MCF 10A (cell line): ENCODE measurements at regions of chr19 and their contacts with region 1.

Region 1: DNA sequence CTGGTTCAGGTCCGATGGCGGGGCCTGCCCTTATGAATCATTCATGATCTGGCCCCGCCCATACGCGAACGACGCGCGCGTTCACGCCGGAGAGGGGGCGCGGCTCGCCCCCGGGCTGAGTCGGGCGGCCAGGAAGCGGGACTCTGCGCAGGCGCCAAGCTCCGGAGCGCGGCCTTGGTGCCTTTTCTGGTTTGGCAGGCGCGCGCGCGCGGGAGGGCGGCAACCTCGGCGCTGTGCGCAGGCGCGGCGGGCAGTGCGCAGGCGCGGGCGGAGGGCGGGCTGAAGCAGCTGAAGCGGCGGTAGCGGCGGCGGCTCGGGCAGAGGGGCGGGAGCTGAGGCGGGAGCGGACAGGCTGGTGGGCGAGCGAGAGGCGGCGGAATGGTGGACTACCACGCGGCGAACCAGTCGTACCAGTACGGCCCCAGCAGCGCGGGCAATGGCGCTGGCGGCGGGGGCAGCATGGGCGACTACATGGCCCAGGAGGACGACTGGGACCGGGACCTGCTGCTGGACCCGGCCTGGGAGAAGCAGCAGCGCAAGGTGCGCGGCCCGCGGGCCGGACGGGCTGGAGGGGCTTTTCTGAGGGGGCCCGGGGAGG is at the start of gene ACTN4:
- DNase-seq: peak; percentile 97
- H3K4me3 Mint-ChIP-seq: peak within 1 kb of the TSS; percentile 84
- H3K27ac Mint-ChIP-seq: peak within 1 kb of the TSS; percentile 86
- H3K4me1 Mint-ChIP-seq: peaks cover 14% of the 10 kb centered on the region
- H3K27me3 Mint-ChIP-seq: no peaks in the 10 kb centered on the region
- CTCF ChIP-seq: no peak
- total RNA-seq, gene ACTN4: 300 and 320 TPM in 2 replicates

Region 2: GRCh38 chr19:38483016-38483630 is 164.3 kb before region 1 on chr19:
- CTCF ChIA-PET with region 1: no interaction called
- POLR2A ChIA-PET with region 1: no interaction called
- intact Hi-C with region 1: no loop called
- DNase-seq: no peak
- H3K4me3 Mint-ChIP-seq: no peak overlapping the region
- H3K27ac Mint-ChIP-seq: no peak overlapping the region
- H3K4me1 Mint-ChIP-seq: no peaks in the 10 kb centered on the region
- H3K27me3 Mint-ChIP-seq: peaks cover 27% of the 10 kb centered on the region
- CTCF ChIP-seq: no peak

Region 3: DNA sequence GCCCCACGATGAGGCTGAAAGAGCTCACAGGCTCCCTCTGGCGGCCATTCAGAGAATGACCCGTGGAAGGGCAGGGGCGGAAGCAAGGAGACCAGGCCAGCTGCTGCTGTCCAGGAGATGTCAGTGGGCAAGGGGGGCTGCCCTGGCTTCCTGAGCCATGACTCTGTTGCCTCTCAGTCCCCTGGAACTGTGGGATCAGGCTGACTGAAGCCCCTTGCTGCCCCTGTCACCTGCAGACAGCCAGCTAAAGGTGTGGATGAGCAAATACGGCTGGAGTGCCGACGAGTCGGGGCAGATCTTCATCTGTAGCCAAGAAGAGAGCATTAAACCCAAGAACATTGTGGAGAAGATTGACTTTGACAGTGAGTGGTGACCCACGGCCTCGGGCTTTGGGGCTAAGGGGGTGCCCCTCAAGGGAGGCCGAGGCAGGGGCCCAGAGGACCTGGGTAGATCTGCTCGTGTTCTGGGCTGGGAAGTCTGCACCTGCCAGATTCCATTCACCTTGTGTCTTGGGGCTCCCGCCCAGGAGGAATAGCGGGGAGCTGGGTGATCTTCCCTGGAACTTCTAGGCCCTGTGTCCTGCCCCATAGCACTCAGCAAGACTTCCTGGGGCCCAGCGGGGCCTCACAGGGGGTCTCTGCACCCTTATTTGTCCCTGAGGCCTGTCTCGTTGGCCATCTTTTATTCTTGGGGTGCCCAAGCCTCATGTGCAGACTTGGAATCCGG is 12.5 kb before region 1 on chr19:
- CTCF ChIA-PET with region 1: interaction called, 10 read pairs
- POLR2A ChIA-PET with region 1: interaction called, 81 read pairs
- intact Hi-C with region 1: no loop called
- DNase-seq: peak; percentile 80
- H3K4me3 Mint-ChIP-seq: no peak overlapping the region
- H3K27ac Mint-ChIP-seq: peak overlapping the region; percentile 24
- H3K4me1 Mint-ChIP-seq: peaks cover 17% of the 10 kb centered on the region
- H3K27me3 Mint-ChIP-seq: no peaks in the 10 kb centered on the region
- CTCF ChIP-seq: peak; percentile 91

Region 4: DNA sequence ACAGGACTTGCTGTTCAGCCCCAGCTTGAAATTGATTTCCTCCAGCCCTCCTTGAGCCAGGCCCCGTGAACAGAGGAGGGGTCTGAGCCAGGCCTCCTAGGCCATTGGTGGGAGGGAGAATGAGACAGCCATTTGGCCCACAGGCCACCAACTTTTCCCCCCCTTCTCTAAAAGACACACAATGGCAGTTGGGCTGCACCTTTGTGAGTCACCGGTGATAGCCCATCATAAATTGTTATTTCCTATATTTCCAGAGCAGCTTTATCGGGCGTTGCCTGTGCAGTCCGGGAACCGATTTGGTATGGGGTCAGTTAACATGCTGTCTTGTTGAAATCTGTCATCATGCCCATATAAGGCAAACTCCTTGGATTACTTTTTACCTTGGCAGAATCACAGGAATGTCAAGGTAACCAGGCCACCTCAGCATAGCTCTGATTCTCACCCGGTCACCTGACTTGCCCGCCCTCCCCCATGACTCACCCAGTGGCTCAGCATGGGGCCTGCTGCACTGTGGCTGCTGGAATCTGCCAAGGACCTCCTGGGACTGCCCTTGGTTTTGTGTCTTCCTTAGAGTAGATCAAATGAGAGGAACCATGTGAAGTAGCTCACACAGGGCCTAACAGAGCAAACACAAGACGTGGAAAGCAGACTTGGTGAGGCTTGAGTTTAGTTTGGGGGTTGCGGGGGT is 36.1 kb after region 1 on chr19:
- CTCF ChIA-PET with region 1: interaction called, 5 read pairs
- POLR2A ChIA-PET with region 1: interaction called, 521 read pairs
- intact Hi-C with region 1: loop called (anchors 2 kb)
- DNase-seq: peak; percentile 99
- H3K4me3 Mint-ChIP-seq: peak overlapping the region; percentile 48
- H3K27ac Mint-ChIP-seq: peak overlapping the region; percentile 98
- H3K4me1 Mint-ChIP-seq: peaks cover 68% of the 10 kb centered on the region
- H3K27me3 Mint-ChIP-seq: no peaks in the 10 kb centered on the region
- CTCF ChIP-seq: no peak

Region 5: GRCh38 chr19:38736413-38737280 is 89.2 kb after region 1 on chr19:
- CTCF ChIA-PET with region 1: no interaction called
- POLR2A ChIA-PET with region 1: no interaction called
- intact Hi-C with region 1: no loop called
- DNase-seq: peak; percentile 26
- H3K4me3 Mint-ChIP-seq: peak overlapping the region; percentile 30
- H3K27ac Mint-ChIP-seq: no peak overlapping the region
- H3K4me1 Mint-ChIP-seq: peaks cover 25% of the 10 kb centered on the region
- H3K27me3 Mint-ChIP-seq: no peaks in the 10 kb centered on the region
- CTCF ChIP-seq: no peak

Region 6: DNA sequence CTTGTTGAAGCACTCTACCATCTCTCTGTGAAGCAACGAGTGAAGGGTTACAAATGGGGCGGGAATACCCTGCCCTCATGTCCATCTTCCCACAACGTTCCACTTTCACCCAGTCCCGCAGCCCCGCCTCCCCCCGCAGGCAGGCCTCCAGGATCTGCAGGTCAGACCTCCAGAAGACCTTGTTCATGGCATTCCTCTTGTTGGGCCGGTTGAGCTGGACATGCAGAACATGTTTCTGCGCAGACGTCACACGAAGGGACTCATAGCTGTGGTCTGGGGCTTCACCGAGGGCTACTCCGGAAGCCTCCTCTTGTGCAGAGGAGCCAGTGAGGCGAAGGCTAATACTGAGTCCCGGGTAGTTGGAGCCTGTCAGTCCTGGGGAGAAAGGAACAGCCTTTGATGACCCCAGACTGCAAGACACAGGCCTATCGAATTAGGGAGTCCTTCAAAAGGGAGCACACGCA is 183.7 kb after region 1 on chr19:
- CTCF ChIA-PET with region 1: interaction called, 3 read pairs
- POLR2A ChIA-PET with region 1: interaction called, 74 read pairs
- intact Hi-C with region 1: loop called (anchors 1 kb)
- DNase-seq: peak; percentile 73
- H3K4me3 Mint-ChIP-seq: peak overlapping the region; percentile 77
- H3K27ac Mint-ChIP-seq: peak overlapping the region; percentile 82
- H3K4me1 Mint-ChIP-seq: peaks cover 17% of the 10 kb centered on the region
- H3K27me3 Mint-ChIP-seq: no peaks in the 10 kb centered on the region
- CTCF ChIP-seq: no peak

Region 7: GRCh38 chr19:38899447-38900219 is 252.2 kb after region 1 on chr19 and contains the starts of genes NFKBIB and SIRT2:
- CTCF ChIA-PET with region 1: no interaction called
- POLR2A ChIA-PET with region 1: interaction called, 10 read pairs
- intact Hi-C with region 1: no loop called
- DNase-seq: peak; percentile 100
- H3K4me3 Mint-ChIP-seq: peak within 1 kb of the TSS; percentile 88
- H3K27ac Mint-ChIP-seq: peak within 1 kb of the TSS; percentile 98
- H3K4me1 Mint-ChIP-seq: peaks cover 27% of the 10 kb centered on the region
- H3K27me3 Mint-ChIP-seq: no peaks in the 10 kb centered on the region
- CTCF ChIP-seq: no peak
- total RNA-seq, gene NFKBIB: 45.1 and 45.4 TPM in 2 replicates
- total RNA-seq, gene SIRT2: 35.5 and 37.4 TPM in 2 replicates